Posterior cingulate gyrus (tissue), 11 donors: ENCODE measurements at regions of chr5 and their contacts with region 1.

Region 1: DNA sequence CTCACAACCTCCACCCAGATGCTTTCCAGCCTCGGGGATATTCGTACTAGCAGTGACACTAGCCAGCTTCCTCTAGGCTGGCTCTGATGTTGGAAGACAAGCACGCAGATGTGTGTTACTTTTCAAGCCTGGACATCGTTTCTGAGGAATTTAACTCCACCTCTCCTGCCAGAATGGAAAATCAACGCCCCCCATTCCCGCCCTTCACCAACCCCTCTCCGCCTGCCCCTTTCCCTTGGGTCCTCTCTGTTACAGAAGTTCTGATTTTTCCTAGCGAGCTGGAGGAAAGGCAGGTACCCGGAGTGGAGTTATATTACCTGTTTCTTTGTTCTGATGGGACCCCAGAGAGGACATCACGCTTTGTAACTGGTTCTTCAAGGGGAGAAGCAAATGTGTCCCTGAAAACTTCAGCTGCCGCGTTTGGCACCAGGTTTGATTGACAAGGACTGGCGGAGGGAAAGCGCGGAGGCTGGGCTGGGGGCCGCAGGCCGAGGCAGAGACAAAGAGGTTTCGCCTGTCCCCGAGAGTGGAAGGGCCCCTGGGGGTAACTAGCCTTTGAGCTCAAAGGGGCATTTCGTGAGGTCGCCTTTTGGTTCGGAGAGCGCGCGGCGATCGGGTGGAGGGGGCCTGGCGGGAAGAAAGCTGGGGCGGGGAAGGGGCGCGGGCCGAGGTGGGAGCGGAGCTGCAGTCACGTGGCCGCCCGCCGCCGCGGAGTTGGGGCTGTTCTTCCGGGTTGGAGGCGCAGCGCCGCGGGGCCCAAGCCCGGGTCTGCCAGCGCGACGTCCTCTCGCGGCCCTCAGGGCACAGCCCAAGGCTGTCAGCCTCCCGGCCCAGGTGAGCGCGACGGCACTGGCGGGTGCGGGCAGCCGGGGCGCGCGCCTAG is at the start of gene NNT:
- DNase-seq: peak; percentile 71 to 97 (median 83)

Region 2: DNA sequence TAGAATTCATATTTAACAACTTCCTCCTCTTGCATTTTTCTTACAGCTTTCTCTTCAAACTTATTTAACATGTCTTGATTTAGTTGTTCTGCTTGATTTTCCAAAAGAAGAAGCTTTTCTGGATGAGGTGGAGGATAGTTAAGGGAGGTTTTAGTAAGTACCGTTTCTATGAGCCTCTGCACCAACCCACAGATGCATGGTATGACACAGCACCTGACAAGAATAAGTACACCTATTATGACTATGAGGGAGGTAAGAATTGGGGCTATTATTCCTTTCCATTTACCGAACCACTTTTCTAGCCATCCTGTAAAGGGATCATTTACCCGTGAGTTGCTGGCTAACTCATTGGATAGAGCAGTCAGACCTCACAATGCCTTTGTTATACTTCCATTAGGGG is 287.0 kb before region 1 on chr5:
- intact Hi-C with region 1: no loop called
- DNase-seq: no peak

Region 3: GRCh38 chr5:43497311-43498104 is 105.2 kb before region 1 on chr5:
- intact Hi-C with region 1: no loop called
- DNase-seq: no peak

Region 4: GRCh38 chr5:43556857-43557542 is 45.7 kb before region 1 on chr5 and contains the start of gene PAIP1:
- intact Hi-C with region 1: loop called (anchors 2 kb)
- DNase-seq: peak; percentile 60 to 96 (median 72)